ENCODE measurements at regions of chrX and their contacts with region 1.

Region 1: DNA sequence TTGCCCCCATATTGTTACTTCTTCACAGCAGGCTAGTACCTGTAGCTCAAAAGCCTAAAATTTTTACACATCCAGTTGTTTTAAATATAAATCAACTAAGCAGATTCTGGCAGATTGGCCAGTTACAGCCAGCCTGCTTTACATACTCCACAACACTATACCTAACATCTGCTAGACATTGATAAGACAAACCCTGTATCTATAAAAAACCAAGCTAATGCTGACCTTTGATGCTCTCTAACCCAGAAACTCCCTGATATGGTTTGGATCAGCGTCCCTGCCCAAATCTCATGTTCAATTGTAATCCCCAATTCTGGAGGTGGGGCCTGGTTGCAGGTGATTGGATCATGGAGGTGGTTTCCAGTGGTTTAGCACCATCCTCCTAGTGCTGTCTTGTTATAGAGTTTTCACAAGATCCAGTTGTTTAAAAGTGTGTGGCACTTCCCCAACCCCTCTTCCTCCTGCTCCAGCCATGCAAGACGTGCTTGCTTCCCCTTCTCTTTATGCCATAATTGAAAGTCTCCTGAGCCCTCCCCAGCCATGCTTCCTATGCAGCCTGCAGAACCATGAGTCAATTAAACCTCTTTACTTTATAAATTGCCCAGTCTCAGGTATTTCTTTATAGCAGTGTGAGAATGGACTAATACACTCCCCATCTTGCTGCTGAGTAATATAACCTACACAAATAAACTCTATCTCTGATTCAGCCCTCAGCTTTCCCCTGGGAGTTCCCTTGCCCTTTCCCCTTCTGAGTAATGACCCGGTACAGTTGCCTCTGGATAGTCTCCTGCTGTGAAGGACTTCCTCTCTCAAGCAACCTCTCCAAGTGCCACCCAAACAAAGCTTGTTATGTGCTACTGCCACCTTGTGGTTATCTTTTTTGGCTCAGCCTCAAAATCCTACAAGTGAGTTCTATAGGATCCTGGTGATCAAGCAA is 39.6 kb downstream of the ZCCHC13 start:
- DNase-seq: peak; percentile 21
- H3K4me3 Mint-ChIP-seq: no peak overlapping the region
- H3K27ac Mint-ChIP-seq: no peak overlapping the region
- H3K4me1 Mint-ChIP-seq: no peaks in the 10 kb centered on the region
- H3K27me3 Mint-ChIP-seq: no peaks in the 10 kb centered on the region

Region 2: GRCh38 chrX:74015379-74016019 is 328.1 kb before region 1 on chrX:
- intact Hi-C with region 1: loop called (anchors 1 kb)
- DNase-seq: peak; percentile 28
- H3K4me3 Mint-ChIP-seq: no peak overlapping the region
- H3K27ac Mint-ChIP-seq: no peak overlapping the region
- H3K4me1 Mint-ChIP-seq: peaks cover 9% of the 10 kb centered on the region
- H3K27me3 Mint-ChIP-seq: no peaks in the 10 kb centered on the region

Measured in activated T-helper 1 cell treated with anti-CD3 and anti-CD28 coated beads, Interleukin-12 subunit alpha, Interleukin-12 subunit beta, Interleukin-2, Interleukin-4 antibody, amounts not matched to agents 30 ng/mL and 10 ng/mL and 1 ng/mL, durations not matched to agents 14 hours and 24 hours and 36 hours (primary cell).